ENCODE measurements at regions of chr12 and their contacts with region 1.

Region 1: GRCh38 chr12:52226446-52226845 is 6.6 kb upstream of the KRT7 start:
- DNase-seq: no peak
- ATAC-seq: no peak
- H3K4me3 ChIP-seq: no peak overlapping the region
- H3K4me3 Mint-ChIP-seq: no peak overlapping the region
- H3K27ac ChIP-seq: no peak overlapping the region
- H3K27ac Mint-ChIP-seq: no peak overlapping the region
- H3K4me1 ChIP-seq: no peaks in the 10 kb centered on the region
- H3K4me1 Mint-ChIP-seq: no peaks in the 10 kb centered on the region
- H3K27me3 ChIP-seq: peaks cover 9 to 39% of the 10 kb centered on the region in 2 experiments
- H3K27me3 Mint-ChIP-seq: peaks cover 24 to 48% of the 10 kb centered on the region in 2 donors

Region 2: DNA sequence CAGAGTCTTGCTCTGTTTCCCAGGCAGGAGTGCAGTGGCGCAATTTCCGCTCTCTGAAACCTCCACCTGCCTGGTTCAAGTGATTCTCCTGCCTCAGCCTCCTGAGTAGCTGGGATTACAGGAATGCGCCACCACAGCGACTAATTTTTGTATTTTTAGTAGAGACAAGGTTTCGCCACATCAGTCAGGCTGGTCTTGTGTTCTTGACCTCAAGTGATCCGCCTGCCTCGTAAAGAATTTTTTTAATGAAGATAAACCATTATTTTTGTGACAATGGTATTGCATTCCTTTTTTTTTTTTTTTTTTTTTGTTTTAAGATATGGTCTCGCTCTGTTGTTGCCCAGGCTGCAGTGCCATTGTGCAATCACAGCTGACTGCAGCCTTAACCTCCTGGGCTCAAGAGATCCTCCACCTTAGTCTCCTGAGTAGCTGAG is 249.1 kb before region 1 on chr12:
- CTCF ChIA-PET with region 1: no interaction called
- POLR2A ChIA-PET with region 1: interaction called in 1 of 2 experiments, 10 read pairs
- DNase-seq: no peak
- ATAC-seq: no peak
- H3K4me3 ChIP-seq: no peak overlapping the region
- H3K4me3 Mint-ChIP-seq: no peak overlapping the region
- H3K27ac ChIP-seq: no peak overlapping the region
- H3K27ac Mint-ChIP-seq: no peak overlapping the region
- H3K4me1 ChIP-seq: peaks cover 45 to 49% of the 10 kb centered on the region in 2 experiments
- H3K4me1 Mint-ChIP-seq: peaks cover 51 to 63% (median 52%) of the 10 kb centered on the region in 3 donors
- H3K27me3 ChIP-seq: no peaks in the 10 kb centered on the region
- H3K27me3 Mint-ChIP-seq: no peaks in the 10 kb centered on the region

Region 3: DNA sequence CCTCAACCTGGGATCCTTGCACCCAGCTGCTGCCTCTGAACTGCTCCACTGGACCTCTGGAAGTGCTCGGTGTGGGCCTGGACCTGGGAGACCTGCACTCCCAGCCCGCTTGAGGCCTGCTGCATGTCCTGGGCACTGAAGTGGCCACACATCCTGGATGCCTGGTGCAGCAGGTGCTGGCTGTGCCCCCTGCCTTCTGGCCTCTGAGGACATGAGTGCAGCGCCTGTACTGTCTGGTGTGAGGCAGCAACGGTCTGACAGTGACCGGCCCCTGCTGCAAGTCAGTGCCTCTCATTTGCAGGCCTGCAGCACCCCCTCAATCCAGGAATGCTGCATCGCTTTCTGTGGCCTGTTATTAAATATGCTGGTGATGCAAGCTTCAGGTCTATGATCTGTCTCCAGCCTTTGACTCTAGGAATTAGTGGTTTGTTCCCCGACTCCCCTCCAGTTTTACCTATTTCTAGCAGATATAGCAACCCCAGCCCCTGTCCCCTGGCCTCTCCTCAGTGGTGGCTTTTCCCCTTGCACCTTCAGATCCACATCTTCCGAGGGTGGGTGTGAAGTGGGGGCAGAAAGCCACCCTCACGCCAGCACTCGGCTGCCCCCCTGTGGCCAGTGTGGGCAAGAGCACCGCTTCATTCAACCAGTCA is 143.3 kb before region 1 on chr12:
- CTCF ChIA-PET with region 1: no interaction called
- POLR2A ChIA-PET with region 1: no interaction called
- DNase-seq: peak; percentile 31 to 82 (median 56)
- ATAC-seq: peak; percentile 74 to 79 (median 76)
- H3K4me3 ChIP-seq: no peak overlapping the region
- H3K4me3 Mint-ChIP-seq: no peak overlapping the region
- H3K27ac ChIP-seq: no peak overlapping the region
- H3K27ac Mint-ChIP-seq: peak overlapping the region in 1 of 2 donors; percentile 30
- H3K4me1 ChIP-seq: peaks cover 6 to 28% of the 10 kb centered on the region in 2 experiments
- H3K4me1 Mint-ChIP-seq: peaks cover 12 to 15% (median 13%) of the 10 kb centered on the region in 3 donors
- H3K27me3 ChIP-seq: peaks cover 0 to 21% of the 10 kb centered on the region in 2 experiments
- H3K27me3 Mint-ChIP-seq: peaks cover 11 to 16% of the 10 kb centered on the region in 2 donors

Region 4: GRCh38 chr12:52247228-52247892 is 20.9 kb after region 1 on chr12:
- CTCF ChIA-PET with region 1: no interaction called
- POLR2A ChIA-PET with region 1: no interaction called
- DNase-seq: no peak
- ATAC-seq: no peak
- H3K4me3 ChIP-seq: no peak overlapping the region
- H3K4me3 Mint-ChIP-seq: no peak overlapping the region
- H3K27ac ChIP-seq: no peak overlapping the region
- H3K27ac Mint-ChIP-seq: peak overlapping the region in 1 of 2 donors; percentile 47
- H3K4me1 ChIP-seq: peaks cover 0 to 24% of the 10 kb centered on the region in 2 experiments
- H3K4me1 Mint-ChIP-seq: peaks cover 27 to 56% (median 36%) of the 10 kb centered on the region in 3 donors
- H3K27me3 ChIP-seq: peaks cover 3 to 41% of the 10 kb centered on the region in 2 experiments
- H3K27me3 Mint-ChIP-seq: peaks cover 17 to 27% of the 10 kb centered on the region in 2 donors

Measured in T-cell (primary cell).